ENCODE measurements at regions of chr15 and their contacts with region 1.

Region 1: DNA sequence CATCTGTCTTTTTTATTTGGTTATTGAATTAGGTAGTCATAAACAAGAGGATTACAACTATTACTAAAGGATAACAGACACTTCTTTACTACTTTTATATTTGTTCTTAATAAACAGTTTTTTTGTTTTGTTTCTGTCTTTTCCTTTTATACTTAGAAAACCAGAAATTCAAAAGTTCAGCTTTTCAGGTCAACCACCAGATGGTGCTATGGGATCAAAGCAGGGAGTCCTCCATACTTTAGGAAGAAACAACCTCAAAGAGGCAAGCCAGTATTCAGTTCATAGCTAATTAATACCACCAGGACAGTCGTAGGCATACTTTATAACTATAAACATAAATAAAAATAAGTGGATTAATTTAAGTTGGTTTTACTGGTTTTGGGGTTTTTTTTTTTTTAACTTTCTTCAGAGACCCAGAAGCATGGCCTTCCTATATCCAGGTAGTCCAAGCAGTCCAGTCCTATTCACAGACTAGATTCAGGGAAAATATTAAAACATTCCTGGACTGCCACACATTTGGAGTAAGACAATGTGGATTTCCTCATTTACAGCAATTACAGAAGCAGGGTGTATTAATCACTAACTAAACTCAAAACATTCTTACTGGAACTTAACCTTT is 16.0 kb upstream of the EID1 start:
- DNase-seq: peak; percentile 86
- H3K4me3 Mint-ChIP-seq: no peak overlapping the region
- H3K27ac Mint-ChIP-seq: no peak overlapping the region
- H3K4me1 Mint-ChIP-seq: peaks cover 14% of the 10 kb centered on the region
- H3K27me3 Mint-ChIP-seq: peaks cover 2% of the 10 kb centered on the region

Region 2: DNA sequence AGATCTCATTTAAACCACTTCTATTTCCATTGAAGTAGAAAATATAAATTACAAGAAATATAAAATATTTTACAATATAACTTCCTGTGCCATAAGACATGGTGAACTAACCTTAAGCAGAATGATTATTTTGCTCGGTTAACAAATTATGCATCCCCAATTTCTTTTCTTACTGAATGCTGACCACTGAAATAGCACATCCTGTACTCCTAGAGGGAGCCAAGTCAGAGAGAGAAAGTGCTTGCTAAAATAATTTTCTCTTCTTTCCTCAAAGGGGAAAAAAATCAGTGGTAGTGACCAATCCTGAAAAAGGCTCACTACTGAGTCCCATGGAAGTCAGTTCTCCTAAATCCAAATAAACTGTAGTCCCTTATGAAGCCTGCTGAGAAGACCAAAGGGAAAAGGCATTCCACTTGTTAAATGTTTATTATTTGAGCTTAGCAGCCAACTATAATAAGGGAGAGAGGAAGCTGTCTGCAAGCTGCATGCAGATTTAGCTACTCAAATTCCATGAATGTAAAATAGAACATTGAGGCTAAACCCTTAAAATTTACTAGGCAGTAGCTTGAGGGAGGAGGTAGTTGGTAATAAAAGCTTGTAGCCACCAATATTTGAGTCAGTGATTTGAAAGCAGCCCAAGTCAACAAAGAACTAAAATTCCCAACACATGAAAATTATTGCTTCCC is 84.1 kb before region 1 on chr15:
- intact Hi-C with region 1: no loop called
- DNase-seq: no peak
- H3K4me3 Mint-ChIP-seq: no peak overlapping the region
- H3K27ac Mint-ChIP-seq: no peak overlapping the region
- H3K4me1 Mint-ChIP-seq: peaks cover 6% of the 10 kb centered on the region
- H3K27me3 Mint-ChIP-seq: no peaks in the 10 kb centered on the region

Region 3: DNA sequence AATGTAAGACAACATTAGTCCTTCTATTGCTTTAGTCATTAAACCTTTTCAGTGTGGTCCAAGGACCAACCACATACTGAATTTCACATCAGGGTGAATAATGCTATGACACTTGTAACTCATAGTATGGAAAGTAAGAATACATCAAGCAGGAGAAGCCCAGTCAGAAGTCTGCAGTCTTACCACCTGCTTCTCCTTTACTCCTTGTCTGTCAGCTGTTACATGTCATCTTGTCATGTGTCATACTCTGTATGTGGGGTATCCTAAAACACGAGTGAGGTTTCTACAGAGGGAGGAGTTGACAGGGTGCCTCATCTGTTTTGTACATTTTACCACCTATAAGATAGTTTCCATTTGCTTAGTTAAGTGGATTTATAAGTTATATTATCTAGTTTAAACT is 16.8 kb before region 1 on chr15:
- intact Hi-C with region 1: no loop called
- DNase-seq: no peak
- H3K4me3 Mint-ChIP-seq: no peak overlapping the region
- H3K27ac Mint-ChIP-seq: no peak overlapping the region
- H3K4me1 Mint-ChIP-seq: no peaks in the 10 kb centered on the region
- H3K27me3 Mint-ChIP-seq: peaks cover 1% of the 10 kb centered on the region

Region 4: GRCh38 chr15:48877630-48878595 is 16.0 kb after region 1 on chr15 and contains the start of gene EID1:
- intact Hi-C with region 1: loop called (anchors 2 kb)
- DNase-seq: peak; percentile 99
- H3K4me3 Mint-ChIP-seq: peak within 1 kb of the TSS; percentile 97
- H3K27ac Mint-ChIP-seq: peak within 1 kb of the TSS; percentile 99
- H3K4me1 Mint-ChIP-seq: peaks cover 46% of the 10 kb centered on the region
- H3K27me3 Mint-ChIP-seq: peaks cover 4% of the 10 kb centered on the region
- total RNA-seq, gene EID1: 192 and 209 TPM in 2 replicates

Region 5: DNA sequence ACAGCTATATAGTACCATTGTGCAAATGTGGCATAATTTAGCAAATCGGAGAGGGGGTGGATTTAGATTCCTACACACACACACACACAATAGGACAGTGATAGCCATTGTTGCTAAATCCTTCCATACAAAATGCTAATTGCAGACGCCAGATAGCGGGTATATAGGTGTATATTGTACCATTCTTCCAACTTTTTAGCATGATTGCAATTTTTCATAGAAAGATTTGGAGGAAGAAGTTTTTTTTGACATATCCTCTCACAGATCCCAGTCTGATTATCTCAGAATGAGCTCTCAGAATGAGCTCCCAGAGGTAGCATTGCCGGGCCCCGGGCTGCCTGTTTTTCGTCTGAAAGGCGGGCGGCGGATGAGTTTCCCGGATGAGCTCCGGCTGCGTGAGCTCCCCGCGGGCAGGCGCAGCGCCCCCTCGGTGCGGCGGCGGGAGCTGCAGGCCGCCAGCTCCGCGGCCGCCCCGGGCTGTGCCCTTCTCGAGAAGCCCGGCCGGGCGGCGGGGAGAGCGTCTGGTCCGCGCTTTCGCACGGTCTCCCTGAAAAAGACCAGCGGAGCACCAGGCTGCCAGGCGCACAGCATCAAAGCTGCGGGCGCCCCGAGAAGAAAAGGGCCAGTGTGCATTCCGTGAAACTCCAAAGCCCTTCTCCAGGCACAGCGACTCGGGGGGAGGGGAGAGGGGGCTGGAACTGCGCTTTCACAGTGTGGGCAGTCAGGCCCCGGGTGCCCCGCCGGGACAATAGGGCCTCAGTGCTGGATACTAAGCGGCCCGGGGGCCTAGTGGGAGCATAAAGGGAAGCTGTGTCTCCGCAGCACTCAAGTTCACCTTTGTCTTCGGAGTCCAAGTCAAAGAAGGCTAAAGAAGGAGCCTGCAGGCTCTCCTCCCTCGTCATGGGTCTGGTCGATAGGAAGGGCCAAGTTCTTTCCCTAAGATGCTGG is 113.8 kb after region 1 on chr15:
- intact Hi-C with region 1: loop called (anchors 1 kb)
- DNase-seq: peak; percentile 95
- H3K4me3 Mint-ChIP-seq: peak overlapping the region; percentile 68
- H3K27ac Mint-ChIP-seq: peak overlapping the region; percentile 41
- H3K4me1 Mint-ChIP-seq: peaks cover 4% of the 10 kb centered on the region
- H3K27me3 Mint-ChIP-seq: peaks cover 7% of the 10 kb centered on the region

Region 6: GRCh38 chr15:49145651-49146609 is 284.0 kb after region 1 on chr15:
- intact Hi-C with region 1: loop called (anchors 1 kb)
- DNase-seq: peak; percentile 80
- H3K4me3 Mint-ChIP-seq: no peak overlapping the region
- H3K27ac Mint-ChIP-seq: no peak overlapping the region
- H3K4me1 Mint-ChIP-seq: peaks cover 22% of the 10 kb centered on the region
- H3K27me3 Mint-ChIP-seq: no peaks in the 10 kb centered on the region

Region 7: GRCh38 chr15:49421991-49422390 is 560.1 kb after region 1 on chr15:
- intact Hi-C with region 1: loop called (anchors 1 kb)
- DNase-seq: peak; percentile 73
- H3K4me3 Mint-ChIP-seq: peak overlapping the region; percentile 2
- H3K27ac Mint-ChIP-seq: peak overlapping the region; percentile 23
- H3K4me1 Mint-ChIP-seq: peaks cover 4% of the 10 kb centered on the region
- H3K27me3 Mint-ChIP-seq: peaks cover 8% of the 10 kb centered on the region

Region 8: DNA sequence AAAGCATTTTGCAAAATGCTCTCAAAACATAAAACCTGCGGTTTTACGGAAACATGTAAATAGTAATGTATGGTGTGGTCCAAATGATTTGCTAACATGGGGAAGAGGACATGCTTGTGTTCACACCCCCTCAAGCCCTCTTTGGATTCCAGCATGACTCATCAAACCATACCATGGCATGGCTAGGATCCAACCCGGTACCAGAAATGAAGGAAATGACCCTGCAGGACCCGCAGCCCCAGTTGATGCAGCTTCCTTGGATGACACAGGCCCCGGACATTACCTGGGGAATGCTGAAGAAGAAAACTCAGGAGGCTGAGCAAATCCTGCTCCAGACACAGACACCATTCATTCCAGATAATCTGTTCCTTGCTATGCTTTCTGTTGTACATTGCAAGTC is 981.8 kb after region 1 on chr15:
- intact Hi-C with region 1: no loop called
- DNase-seq: no peak
- H3K4me3 Mint-ChIP-seq: no peak overlapping the region
- H3K27ac Mint-ChIP-seq: no peak overlapping the region
- H3K4me1 Mint-ChIP-seq: no peaks in the 10 kb centered on the region
- H3K27me3 Mint-ChIP-seq: no peaks in the 10 kb centered on the region

Measured in activated CD4-positive, alpha-beta T cell treated with anti-CD3 and anti-CD28 coated beads, Interleukin-2, amount 10 ng/mL, durations not matched to agents 24 days and 14 days (primary cell).